ENCODE measurements at regions of chr10 and their contacts with region 1.

Region 1: DNA sequence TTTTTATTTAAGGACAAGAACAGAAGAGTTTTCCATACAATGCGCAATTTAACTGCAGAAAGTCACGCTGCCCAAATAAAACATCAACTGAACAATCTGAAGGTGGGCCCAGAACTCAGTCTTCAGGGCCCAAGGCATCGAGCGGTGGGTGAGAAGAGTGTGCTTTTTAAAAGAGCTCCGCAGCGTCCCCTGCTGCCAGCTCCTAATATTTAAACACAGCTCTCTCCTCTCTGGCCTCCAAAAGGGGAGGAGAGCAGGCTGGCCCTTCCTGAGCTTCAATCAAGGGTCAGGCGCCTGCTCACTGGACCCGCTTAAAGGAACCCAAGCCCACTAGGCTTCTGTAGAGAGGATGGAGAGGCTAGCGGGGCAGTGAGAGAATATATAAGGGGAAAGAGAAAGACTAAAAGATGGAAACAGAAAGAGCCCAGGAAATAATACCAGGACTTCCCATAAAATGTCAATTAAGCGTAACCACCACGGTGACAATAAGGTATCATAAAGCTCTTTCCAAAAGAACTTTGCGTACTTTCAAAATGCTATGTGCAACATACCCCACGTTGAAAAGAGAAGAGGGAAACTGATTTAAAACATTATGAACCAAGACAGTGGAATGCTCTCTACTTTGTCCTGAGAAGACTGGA is 2.8 kb downstream of the FAM53B start:
- DNase-seq: peak; percentile 94
- ATAC-seq: peak; percentile 83

Region 2: DNA sequence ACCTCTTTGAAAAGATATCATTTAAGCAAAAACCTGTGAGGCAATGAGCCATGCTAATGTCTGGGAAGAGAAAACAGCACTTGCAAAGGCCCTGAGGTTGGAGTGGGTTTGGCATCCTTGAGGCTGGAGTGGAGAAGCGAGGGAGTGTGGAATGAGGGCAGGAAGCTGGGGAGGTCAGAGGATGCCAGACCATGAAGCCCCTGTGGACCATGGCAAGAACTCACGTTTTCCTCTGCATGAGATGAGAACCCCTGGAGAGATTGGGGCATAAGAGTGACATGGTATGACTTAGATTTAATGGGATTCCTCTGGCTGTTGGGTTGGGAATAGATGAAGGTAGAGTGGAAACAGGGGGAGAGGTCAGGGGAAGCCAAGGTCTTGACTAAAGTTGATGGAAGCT is 1025.9 kb before region 1 on chr10:
- intact Hi-C with region 1: no loop called
- DNase-seq: no peak
- ATAC-seq: no peak

Region 3: GRCh38 chr10:124354411-124355382 is 386.7 kb before region 1 on chr10:
- intact Hi-C with region 1: no loop called
- DNase-seq: peak; percentile 82
- ATAC-seq: peak; percentile 97

Region 4: GRCh38 chr10:124530215-124530665 is 211.2 kb before region 1 on chr10:
- intact Hi-C with region 1: loop called (anchors 5 kb)
- DNase-seq: peak; percentile 93
- ATAC-seq: peak; percentile 91

Region 5: DNA sequence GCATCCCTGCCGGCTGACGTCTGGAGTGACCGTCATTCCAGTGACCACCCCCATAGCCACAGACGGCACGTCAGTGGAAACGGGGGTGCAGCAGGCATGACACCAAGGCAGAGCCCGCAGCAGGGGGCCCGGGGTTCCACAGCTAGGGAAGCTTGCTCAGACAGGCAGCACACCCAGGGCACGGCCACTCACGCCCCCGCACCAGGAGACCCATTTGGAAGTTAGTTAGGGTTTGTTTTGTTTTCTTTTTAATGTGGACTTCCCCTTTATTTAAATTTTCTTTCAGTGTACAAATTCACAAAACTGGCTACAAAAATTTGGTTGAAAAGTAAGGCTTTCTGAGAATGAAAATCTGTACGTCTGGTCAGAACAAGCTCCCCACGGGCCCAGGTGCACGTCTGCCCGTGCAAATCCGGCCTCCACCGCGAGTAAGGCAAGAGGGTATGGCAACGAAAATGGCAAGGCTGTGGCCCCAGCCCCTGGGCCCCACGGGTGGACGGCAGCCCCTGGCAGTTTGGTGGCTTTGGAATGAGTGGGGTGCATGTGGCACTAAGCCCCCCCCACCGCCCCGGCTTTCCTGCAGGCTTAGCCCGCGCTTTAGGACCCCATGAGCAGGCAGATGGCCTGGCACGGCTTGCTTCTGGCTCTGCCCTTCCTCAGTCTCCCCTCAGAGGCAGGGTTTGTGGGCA is 121.5 kb before region 1 on chr10:
- intact Hi-C with region 1: loop called (anchors 5 kb)
- DNase-seq: no peak
- ATAC-seq: peak; percentile 28

Measured in sciatic nerve (tissue), 2 donors.